T-cell (primary cell): ENCODE measurements at regions of chr6 and their contacts with region 1.

Region 1: DNA sequence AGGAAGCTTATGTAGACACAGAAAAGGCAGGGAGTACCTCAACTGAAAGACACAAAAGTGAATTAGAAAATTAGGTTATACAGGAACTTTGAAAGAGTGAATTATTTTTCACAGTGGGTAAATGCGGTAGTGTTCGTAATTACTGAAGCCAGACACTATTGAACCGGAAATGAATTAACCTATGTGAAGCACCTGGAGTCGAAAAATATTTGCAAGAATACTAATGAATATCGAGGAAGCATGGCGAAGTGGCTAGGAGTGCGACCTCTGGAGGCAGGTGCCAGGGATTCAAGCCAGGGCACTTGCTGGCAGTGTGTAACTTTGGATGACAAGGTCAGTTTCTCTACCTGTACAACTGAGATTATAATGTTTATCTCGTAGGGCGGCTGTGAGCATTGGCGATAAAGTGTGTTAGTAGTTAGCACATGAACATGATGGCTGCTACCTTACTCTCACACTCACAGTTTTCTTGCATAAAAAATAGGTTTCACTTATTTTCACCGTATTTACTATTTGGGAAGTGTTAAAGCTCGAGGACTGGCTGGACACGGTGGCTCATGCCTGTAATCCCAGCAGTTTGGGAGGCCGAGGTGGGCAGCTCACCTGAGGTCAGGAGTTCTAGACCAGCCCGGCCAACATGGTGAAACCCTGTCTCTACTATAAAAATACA is 567 bp upstream of the SLC18B1 start:
- DNase-seq: peak; percentile 37 to 84 (median 58)
- ATAC-seq: peak; percentile 77 to 86 (median 80)
- H3K4me3 ChIP-seq: peak overlapping the region in 1 of 2 donors; percentile 89
- H3K4me3 Mint-ChIP-seq: no peak overlapping the region
- H3K27ac ChIP-seq: no peak overlapping the region
- H3K27ac Mint-ChIP-seq: no peak overlapping the region
- H3K4me1 ChIP-seq: peaks cover 3 to 10% of the 10 kb centered on the region in 2 experiments
- H3K4me1 Mint-ChIP-seq: peaks cover 31 to 32% (median 32%) of the 10 kb centered on the region in 3 donors
- H3K27me3 ChIP-seq: no peaks in the 10 kb centered on the region
- H3K27me3 Mint-ChIP-seq: no peaks in the 10 kb centered on the region

Region 2: GRCh38 chr6:132084833-132085509 is 714.0 kb before region 1 on chr6:
- CTCF ChIA-PET with region 1: no interaction called
- POLR2A ChIA-PET with region 1: no interaction called
- DNase-seq: no peak
- ATAC-seq: no peak
- H3K4me3 ChIP-seq: no peak overlapping the region
- H3K4me3 Mint-ChIP-seq: no peak overlapping the region
- H3K27ac ChIP-seq: no peak overlapping the region
- H3K27ac Mint-ChIP-seq: no peak overlapping the region
- H3K4me1 ChIP-seq: no peaks in the 10 kb centered on the region
- H3K4me1 Mint-ChIP-seq: no peaks in the 10 kb centered on the region
- H3K27me3 ChIP-seq: no peaks in the 10 kb centered on the region
- H3K27me3 Mint-ChIP-seq: no peaks in the 10 kb centered on the region

Region 3: DNA sequence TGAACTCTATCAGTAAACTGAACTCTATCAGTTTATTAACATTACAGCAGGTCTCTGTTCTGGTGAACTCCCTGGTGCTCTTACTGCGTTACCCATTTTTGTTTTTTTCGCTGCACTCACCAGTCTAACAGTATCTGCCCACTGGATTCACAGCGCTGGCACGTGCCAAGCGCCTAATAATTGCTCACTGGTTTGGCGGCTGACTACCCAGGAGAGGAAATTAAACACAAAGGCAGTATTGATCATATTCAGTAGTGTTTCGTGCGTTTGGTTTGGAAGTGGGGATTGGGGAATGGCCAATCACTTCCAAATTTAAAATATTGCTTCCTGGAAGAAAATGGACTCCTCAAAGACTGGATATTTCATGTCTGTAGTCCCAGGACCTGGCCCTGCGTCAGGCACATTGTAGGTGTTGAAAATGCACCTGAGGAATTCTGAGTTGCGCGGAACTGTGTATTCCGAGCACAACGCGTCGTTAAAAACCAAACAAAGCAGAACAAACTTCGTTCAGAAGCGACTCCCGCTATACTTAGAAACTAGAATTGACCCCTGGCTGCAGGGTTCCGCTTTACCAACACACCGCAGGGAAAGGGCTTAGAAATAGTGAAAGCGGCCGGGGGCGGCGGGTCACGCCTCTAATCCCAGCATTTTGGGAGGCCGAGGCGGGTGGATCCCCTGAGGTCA is 14.3 kb after region 1 on chr6:
- CTCF ChIA-PET with region 1: interaction called, 7 to 53 read pairs
- POLR2A ChIA-PET with region 1: interaction called, 13 to 16 read pairs
- DNase-seq: peak in 28 of 35 experiments; percentile 6 to 74 (median 24)
- ATAC-seq: peak; percentile 4 to 28 (median 20)
- H3K4me3 ChIP-seq: peak overlapping the region; percentile 86 to 100
- H3K4me3 Mint-ChIP-seq: peak overlapping the region; percentile 98 to 100 (median 98)
- H3K27ac ChIP-seq: peak overlapping the region; percentile 96
- H3K27ac Mint-ChIP-seq: peak overlapping the region; percentile 99 to 100
- H3K4me1 ChIP-seq: peaks cover 23 to 29% of the 10 kb centered on the region in 2 experiments
- H3K4me1 Mint-ChIP-seq: peaks cover 42 to 57% (median 47%) of the 10 kb centered on the region in 3 donors
- H3K27me3 ChIP-seq: no peaks in the 10 kb centered on the region
- H3K27me3 Mint-ChIP-seq: no peaks in the 10 kb centered on the region

Region 4: GRCh38 chr6:132820629-132821381 is 21.8 kb after region 1 on chr6:
- CTCF ChIA-PET with region 1: interaction called, 11 to 17 read pairs
- POLR2A ChIA-PET with region 1: interaction called, 9 to 13 read pairs
- DNase-seq: peak in 1 of 35 experiments; percentile 12
- ATAC-seq: peak in 1 of 4 experiments; percentile 19
- H3K4me3 ChIP-seq: no peak overlapping the region
- H3K4me3 Mint-ChIP-seq: no peak overlapping the region
- H3K27ac ChIP-seq: no peak overlapping the region
- H3K27ac Mint-ChIP-seq: peak overlapping the region; percentile 88
- H3K4me1 ChIP-seq: peaks cover 9 to 15% of the 10 kb centered on the region in 2 experiments
- H3K4me1 Mint-ChIP-seq: peaks cover 48 to 61% (median 53%) of the 10 kb centered on the region in 3 donors
- H3K27me3 ChIP-seq: no peaks in the 10 kb centered on the region
- H3K27me3 Mint-ChIP-seq: no peaks in the 10 kb centered on the region

Region 5: DNA sequence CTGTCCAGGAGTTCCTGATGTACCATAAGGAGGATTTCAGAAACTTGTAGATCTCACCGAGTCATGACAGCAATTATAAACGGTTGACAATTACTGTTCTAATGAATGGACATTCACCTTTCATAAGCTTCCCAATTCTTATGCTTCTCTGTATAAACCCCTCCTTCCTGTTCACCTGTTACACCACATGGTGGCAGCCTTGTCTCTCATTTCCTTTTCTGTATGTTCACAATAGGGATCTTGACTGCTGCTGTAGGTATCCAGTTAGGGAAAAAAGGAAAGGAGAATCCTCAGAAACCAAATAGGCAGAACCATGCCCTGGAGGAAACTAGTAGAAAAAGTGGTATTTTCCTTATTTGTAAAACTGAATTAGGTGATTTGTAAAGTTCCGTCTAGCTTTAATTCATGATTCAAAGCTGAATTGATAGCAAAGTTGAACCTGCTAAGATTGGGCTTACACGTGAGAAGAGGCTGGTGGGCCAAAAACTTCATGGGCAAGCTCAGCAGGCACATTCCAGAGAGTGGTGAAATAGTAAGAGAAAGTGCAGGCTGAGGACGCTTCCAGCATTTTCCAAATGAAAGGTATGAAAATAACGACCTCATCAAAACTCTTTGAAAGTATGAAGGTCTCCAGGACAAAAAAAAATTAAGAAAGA is 1125.1 kb after region 1 on chr6:
- CTCF ChIA-PET with region 1: no interaction called
- POLR2A ChIA-PET with region 1: interaction called in 1 of 2 experiments, 12 read pairs
- DNase-seq: peak in 33 of 35 experiments; percentile 8 to 82 (median 42)
- ATAC-seq: peak; percentile 80 to 89 (median 86)
- H3K4me3 ChIP-seq: no peak overlapping the region
- H3K4me3 Mint-ChIP-seq: no peak overlapping the region
- H3K27ac ChIP-seq: no peak overlapping the region
- H3K27ac Mint-ChIP-seq: no peak overlapping the region
- H3K4me1 ChIP-seq: no peaks in the 10 kb centered on the region
- H3K4me1 Mint-ChIP-seq: no peaks in the 10 kb centered on the region
- H3K27me3 ChIP-seq: peaks cover 6 to 19% of the 10 kb centered on the region in 2 experiments
- H3K27me3 Mint-ChIP-seq: peaks cover 20 to 40% of the 10 kb centered on the region in 2 donors

Region 6: DNA sequence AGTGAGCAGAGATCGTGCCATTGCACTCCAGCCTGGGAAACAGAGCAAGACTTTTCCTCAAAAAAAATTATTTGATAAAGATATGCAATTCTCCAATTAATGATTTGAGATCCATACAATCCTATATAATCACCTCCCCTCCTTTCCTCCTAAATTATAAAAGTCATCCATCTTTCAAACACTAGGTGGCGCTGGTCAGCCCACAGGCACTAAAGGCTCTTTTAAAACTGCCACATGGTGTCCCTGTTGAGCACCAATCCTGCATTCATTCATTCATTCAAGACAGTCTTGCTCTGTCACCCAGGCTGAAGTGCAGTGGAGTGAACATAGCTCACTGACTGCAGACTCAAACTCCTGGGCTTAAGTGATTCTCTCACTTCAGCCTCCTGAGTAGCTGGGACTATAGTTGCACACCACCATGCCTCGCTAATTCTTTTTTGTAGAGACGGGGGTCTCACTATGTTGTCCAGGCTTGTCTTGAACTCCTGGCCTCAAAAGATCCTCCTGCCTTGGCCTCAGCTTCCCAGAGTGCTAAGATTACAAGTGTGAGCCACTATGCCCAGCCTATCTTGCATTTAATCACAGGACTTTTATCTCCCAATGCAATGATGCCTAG is 1312.2 kb after region 1 on chr6:
- CTCF ChIA-PET with region 1: interaction called in 1 of 2 experiments, 10 read pairs
- POLR2A ChIA-PET with region 1: no interaction called
- DNase-seq: peak in 27 of 35 experiments; percentile 7 to 78 (median 25)
- ATAC-seq: peak; percentile 43 to 57 (median 49)
- H3K4me3 ChIP-seq: no peak overlapping the region
- H3K4me3 Mint-ChIP-seq: no peak overlapping the region
- H3K27ac ChIP-seq: no peak overlapping the region
- H3K27ac Mint-ChIP-seq: no peak overlapping the region
- H3K4me1 ChIP-seq: no peaks in the 10 kb centered on the region
- H3K4me1 Mint-ChIP-seq: peaks cover 0 to 9% (median 3%) of the 10 kb centered on the region in 3 donors
- H3K27me3 ChIP-seq: peaks cover 0 to 18% of the 10 kb centered on the region in 2 experiments
- H3K27me3 Mint-ChIP-seq: peaks cover 15 to 20% of the 10 kb centered on the region in 2 donors